ENCODE measurements at regions of chr14 and their contacts with region 1.

Region 1: DNA sequence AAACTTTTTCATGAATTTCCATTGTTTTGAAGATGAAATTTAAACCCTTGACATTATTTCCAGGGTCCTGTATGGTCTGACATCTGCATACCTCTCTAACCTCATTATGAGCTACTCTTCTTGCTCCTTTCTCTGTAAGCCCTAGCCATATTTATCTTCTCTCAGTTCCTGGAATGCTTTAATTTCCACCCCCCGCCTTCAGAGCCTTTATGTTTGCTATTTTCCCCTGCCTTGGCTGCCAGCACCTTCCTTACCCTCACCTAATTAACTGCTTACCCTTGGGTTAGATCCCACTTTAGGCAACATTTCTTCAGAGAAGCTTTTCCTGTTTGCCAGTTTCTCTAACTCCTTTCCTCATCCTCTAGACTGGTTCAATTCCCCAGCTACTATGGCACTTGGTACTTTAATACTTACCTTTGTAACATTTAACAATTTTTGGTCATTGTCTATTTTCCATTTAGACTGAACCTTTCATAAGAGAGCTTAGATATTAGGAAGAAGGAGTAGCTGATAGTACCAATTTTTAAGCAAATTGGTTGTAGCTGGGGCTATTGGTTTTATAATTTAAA is 6.0 kb downstream of the STYX start:
- DNase-seq: peak; percentile 1
- ATAC-seq: no peak
- H3K4me3 ChIP-seq: no peak overlapping the region
- H3K27ac ChIP-seq: no peak overlapping the region
- H3K4me1 ChIP-seq: peaks cover 2% of the 10 kb centered on the region; the same call in 1 of the 2 replicates
- H3K27me3 ChIP-seq: no peaks in the 10 kb centered on the region
- CTCF ChIP-seq: no peak
- POLR2A ChIP-seq: no peak
- RAD21 ChIP-seq: no peak

Region 2: DNA sequence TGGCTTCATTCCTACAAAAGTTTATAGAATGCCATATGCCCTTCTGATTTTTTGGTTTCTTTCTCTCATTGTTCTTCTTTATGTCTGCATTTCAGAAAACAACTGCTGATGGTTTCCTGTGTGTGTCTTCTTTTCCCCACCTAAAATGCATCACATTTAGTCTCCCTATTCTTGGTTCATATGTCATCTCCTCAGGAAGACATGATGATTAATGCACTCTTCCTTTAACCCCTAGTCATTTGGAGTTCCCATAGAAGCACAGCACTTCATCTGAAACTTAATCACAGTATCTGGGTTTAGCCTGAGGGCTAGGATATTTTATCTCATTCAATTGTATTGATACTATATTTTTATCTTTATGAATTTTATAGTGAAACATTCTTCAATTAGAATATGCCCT is 33.9 kb after region 1 on chr14:
- CTCF ChIA-PET with region 1: no interaction called
- POLR2A ChIA-PET with region 1: no interaction called
- dilution Hi-C with region 1: no loop called
- in situ Hi-C with region 1: no loop called
- intact Hi-C with region 1: loop called (anchors 5 kb)
- DNase-seq: no peak
- ATAC-seq: no peak
- H3K4me3 ChIP-seq: no peak overlapping the region
- H3K27ac ChIP-seq: no peak overlapping the region
- H3K4me1 ChIP-seq: no peaks in the 10 kb centered on the region
- H3K27me3 ChIP-seq: no peaks in the 10 kb centered on the region
- CTCF ChIP-seq: no peak
- POLR2A ChIP-seq: no peak
- RAD21 ChIP-seq: no peak

Region 3: DNA sequence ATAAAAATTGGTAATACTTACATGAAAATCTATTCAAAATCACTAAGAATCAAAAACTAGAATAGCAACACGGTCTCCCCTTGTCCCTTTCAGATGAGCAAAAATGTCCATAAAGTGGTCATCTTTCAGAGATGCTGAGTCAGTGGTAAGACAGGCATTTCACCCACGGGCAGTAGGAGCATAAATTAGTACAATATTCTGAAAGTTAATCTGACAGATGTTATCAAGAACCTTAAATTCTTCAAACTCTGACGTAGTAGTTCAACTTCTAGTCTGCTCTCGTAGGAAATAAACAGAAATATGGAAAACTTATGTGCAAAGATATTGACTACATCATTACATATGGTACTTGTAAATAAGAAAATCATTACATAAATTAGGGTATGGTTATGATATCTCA is 88.5 kb after region 1 on chr14:
- CTCF ChIA-PET with region 1: no interaction called
- POLR2A ChIA-PET with region 1: no interaction called
- dilution Hi-C with region 1: no loop called
- in situ Hi-C with region 1: no loop called
- intact Hi-C with region 1: no loop called
- DNase-seq: peak; percentile 18
- ATAC-seq: no peak; the same call in 1 of the 2 replicates
- H3K4me3 ChIP-seq: no peak overlapping the region
- H3K27ac ChIP-seq: no peak overlapping the region
- H3K4me1 ChIP-seq: peaks cover 3% of the 10 kb centered on the region
- H3K27me3 ChIP-seq: no peaks in the 10 kb centered on the region
- CTCF ChIP-seq: no peak
- POLR2A ChIP-seq: no peak
- RAD21 ChIP-seq: no peak

Measured in IMR-90 (cell line).